ENCODE measurements at regions of chr3 and their contacts with region 1.

Region 1: GRCh38 chr3:4493014-4493940 is at the start of gene ITPR1:
- DNase-seq: peak; percentile 92
- ATAC-seq: peak; percentile 88
- H3K4me3 Mint-ChIP-seq: peak within 1 kb of the TSS; percentile 93
- H3K27ac Mint-ChIP-seq: peak within 1 kb of the TSS; percentile 92
- H3K4me1 Mint-ChIP-seq: peaks cover 49% of the 10 kb centered on the region
- H3K27me3 Mint-ChIP-seq: no peaks in the 10 kb centered on the region
- CTCF ChIP-seq: no peak
- total RNA-seq, gene ITPR1: 116 and 143 TPM in 2 replicates

Region 2: DNA sequence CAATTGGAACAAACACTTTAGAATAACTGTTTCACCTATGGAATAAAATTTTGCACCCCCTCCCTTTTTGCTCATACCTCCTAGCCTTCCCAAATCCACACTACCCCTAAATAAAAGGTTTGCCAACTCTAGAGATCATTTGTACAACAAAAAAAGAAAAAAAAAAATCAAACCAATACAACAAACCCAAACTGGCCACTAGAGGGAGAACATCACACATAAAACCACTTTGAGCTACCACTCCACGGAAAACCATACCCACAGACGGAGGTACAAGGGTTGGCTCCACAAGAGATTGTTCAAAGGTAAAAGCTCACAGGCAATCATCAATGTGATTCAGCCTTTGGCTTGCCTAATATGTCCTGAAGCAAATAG is 142.5 kb before region 1 on chr3:
- CTCF ChIA-PET with region 1: interaction called, 5 read pairs
- POLR2A ChIA-PET with region 1: interaction called, 6 read pairs
- intact Hi-C with region 1: loop called (anchors 2 kb)
- DNase-seq: no peak
- ATAC-seq: peak; percentile 88
- H3K4me3 Mint-ChIP-seq: peak overlapping the region; percentile 44
- H3K27ac Mint-ChIP-seq: peak overlapping the region; percentile 8
- H3K4me1 Mint-ChIP-seq: peaks cover 9% of the 10 kb centered on the region
- H3K27me3 Mint-ChIP-seq: no peaks in the 10 kb centered on the region
- CTCF ChIP-seq: peak; percentile 26

Region 3: GRCh38 chr3:4398120-4398940 is 94.9 kb before region 1 on chr3:
- CTCF ChIA-PET with region 1: no interaction called
- POLR2A ChIA-PET with region 1: no interaction called
- intact Hi-C with region 1: no loop called
- DNase-seq: no peak
- ATAC-seq: no peak
- H3K4me3 Mint-ChIP-seq: no peak overlapping the region
- H3K27ac Mint-ChIP-seq: no peak overlapping the region
- H3K4me1 Mint-ChIP-seq: no peaks in the 10 kb centered on the region
- H3K27me3 Mint-ChIP-seq: no peaks in the 10 kb centered on the region
- CTCF ChIP-seq: no peak

Region 4: DNA sequence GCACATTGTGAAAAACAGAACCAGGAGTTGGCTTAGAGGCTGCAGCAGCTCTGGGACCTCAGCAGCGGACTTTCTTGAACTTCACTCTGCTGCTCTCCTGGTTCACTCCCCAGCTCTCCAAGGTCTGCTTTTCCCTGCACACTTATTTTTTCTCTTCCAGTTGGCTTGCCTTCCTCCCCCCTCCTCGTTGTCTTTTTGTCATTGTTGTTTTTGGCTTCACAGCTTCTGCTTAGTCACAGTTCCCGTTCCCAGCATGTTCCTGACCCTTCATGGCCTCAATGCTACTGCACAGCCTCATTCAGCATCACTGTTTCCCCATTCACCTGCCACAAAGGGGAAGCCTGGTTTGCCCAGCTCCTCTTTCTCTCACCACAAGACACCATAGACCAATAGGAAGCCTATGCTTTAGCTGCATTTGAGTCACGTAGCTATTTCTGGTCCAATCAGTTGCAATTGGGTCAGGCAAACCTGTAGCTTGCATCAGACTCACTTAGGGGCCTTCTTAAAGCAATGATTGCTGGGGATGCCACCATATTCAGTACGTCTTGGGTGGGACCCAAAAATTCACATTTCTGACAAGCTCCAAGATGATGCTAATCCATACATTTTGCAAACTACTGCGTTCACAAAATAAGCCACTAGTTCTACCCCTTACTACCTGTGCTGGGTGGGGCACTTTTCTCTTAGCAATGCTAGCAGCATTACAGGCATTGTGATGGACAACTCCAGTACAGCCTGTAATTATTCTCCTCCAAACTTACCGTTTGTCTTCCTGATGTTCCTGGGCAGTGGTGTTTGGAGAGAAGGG is 18.4 kb before region 1 on chr3:
- CTCF ChIA-PET with region 1: no interaction called
- POLR2A ChIA-PET with region 1: interaction called, 38 read pairs
- intact Hi-C with region 1: loop called (anchors 1 kb)
- DNase-seq: no peak
- ATAC-seq: peak; percentile 81
- H3K4me3 Mint-ChIP-seq: peak overlapping the region; percentile 29
- H3K27ac Mint-ChIP-seq: peak overlapping the region; percentile 46
- H3K4me1 Mint-ChIP-seq: peaks cover 14% of the 10 kb centered on the region
- H3K27me3 Mint-ChIP-seq: no peaks in the 10 kb centered on the region
- CTCF ChIP-seq: no peak

Region 5: GRCh38 chr3:4571690-4572334 is 78.5 kb after region 1 on chr3:
- CTCF ChIA-PET with region 1: no interaction called
- POLR2A ChIA-PET with region 1: no interaction called
- intact Hi-C with region 1: loop called (anchors 1 kb)
- DNase-seq: no peak
- ATAC-seq: peak; percentile 75
- H3K4me3 Mint-ChIP-seq: no peak overlapping the region
- H3K27ac Mint-ChIP-seq: peak overlapping the region; percentile 69
- H3K4me1 Mint-ChIP-seq: peaks cover 64% of the 10 kb centered on the region
- H3K27me3 Mint-ChIP-seq: no peaks in the 10 kb centered on the region
- CTCF ChIP-seq: no peak

Region 6: GRCh38 chr3:4834403-4834866 is 341.2 kb after region 1 on chr3:
- CTCF ChIA-PET with region 1: no interaction called
- POLR2A ChIA-PET with region 1: no interaction called
- intact Hi-C with region 1: loop called (anchors 5 kb)
- DNase-seq: no peak
- ATAC-seq: peak; percentile 56
- H3K4me3 Mint-ChIP-seq: no peak overlapping the region
- H3K27ac Mint-ChIP-seq: peak overlapping the region; percentile 59
- H3K4me1 Mint-ChIP-seq: peaks cover 68% of the 10 kb centered on the region
- H3K27me3 Mint-ChIP-seq: no peaks in the 10 kb centered on the region
- CTCF ChIP-seq: no peak

Region 7: DNA sequence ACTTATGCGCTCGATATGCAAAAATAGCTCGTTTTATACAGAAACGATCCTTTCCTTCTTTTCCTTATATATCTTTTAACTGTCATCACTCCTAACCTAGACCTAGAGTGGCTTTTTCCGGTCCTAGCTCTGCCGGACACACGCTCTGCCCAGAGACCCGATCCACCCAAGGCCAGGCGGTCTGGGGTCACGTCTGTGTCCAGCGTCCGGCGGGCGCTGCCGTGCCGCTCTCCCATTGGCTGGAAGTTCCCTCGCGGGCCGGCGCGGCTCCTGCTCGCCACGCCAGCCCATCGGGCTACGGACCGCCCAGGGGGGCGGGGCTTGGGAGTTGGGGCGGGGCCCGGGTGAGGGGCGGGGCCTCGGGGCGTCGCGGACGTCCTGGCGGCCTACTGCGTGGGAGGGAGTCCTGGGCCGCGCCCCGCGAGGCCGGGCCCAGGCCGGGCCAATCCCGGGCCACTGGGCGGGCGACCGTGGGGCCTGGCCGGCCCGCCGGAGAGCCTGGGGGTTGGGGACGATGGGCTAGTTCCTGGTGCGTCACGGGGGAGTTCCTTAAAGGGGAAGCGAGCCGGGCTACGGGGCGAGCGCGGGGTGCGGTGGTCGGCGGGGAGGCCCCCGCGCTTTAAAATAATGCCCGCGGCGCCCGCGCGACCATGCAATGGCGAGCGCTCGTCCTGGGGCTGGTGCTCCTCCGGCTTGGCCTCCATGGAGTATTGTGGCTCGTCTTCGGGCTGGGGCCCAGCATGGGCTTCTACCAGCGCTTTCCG is 694.1 kb after region 1 on chr3 and contains the start of gene EDEM1:
- CTCF ChIA-PET with region 1: no interaction called
- POLR2A ChIA-PET with region 1: interaction called, 15 read pairs
- intact Hi-C with region 1: loop called (anchors 1 kb)
- DNase-seq: peak; percentile 100
- ATAC-seq: peak; percentile 88
- H3K4me3 Mint-ChIP-seq: peak within 1 kb of the TSS; percentile 98
- H3K27ac Mint-ChIP-seq: peak within 1 kb of the TSS; percentile 99
- H3K4me1 Mint-ChIP-seq: peaks cover 73% of the 10 kb centered on the region
- H3K27me3 Mint-ChIP-seq: no peaks in the 10 kb centered on the region
- CTCF ChIP-seq: no peak
- total RNA-seq, gene EDEM1: 171 and 185 TPM in 2 replicates

Measured in activated B cell treated with CpG ODN at 0.5 μM for 24 hours (primary cell).